Panc1 (cell line): ENCODE measurements at regions of chr12 and their contacts with region 1.

Region 1: GRCh38 chr12:57145460-57146059 is 1.9 kb downstream of the LRP1-AS start:
- DNase-seq: no peak
- ATAC-seq: peak; percentile 50; the same call in 1 of the 2 replicates
- H3K4me3 ChIP-seq: no peak overlapping the region
- H3K27ac ChIP-seq: no peak overlapping the region
- H3K4me1 ChIP-seq: no peaks in the 10 kb centered on the region
- H3K27me3 ChIP-seq: no peaks in the 10 kb centered on the region
- CTCF ChIP-seq: no peak

Region 2: DNA sequence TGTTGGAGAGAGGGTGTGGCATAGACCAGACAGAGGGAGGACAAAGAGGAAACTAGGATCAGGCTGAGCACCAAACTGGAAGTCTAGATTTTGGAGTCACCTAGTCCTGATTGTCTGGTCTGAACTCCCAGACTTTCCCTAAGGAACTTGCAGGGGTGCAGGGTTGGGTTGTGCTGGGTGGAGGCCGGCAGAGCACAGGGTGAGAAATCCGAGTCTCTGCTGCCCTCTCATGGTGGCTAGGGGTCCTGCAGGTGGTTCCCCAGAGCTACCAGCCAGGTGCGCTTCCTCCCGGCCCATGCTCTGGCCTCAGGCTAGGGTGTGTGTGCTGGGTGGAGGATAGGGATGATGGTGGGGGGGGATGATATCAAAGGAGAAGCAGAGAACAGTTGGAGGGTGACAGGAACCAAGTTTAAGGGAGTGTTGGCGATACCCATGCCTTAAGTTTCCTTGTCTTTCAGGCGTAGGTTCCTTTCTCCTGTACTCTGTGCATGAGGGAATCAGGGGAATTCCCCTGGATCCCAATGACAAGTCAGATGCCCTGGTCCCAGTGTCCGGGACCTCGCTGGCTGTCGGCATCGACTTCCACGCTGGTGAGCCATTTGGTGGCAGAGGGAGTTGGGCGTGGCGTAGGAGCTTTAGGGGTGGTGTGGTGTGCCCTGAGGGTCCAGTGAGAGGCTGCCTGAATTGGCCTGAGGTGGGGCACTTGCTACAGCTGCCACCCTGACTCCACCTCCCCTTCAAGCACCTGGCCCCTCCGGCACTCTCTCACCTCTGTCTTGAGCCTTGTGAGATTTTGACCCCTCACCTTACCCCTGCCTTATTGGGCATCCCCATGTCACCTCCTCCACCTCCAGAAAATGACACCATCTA is 37.6 kb after region 1 on chr12:
- CTCF ChIA-PET with region 1: interaction called, 14 read pairs
- POLR2A ChIA-PET with region 1: no interaction called
- in situ Hi-C with region 1: no loop called
- intact Hi-C with region 1: no loop called
- DNase-seq: peak; percentile 59
- ATAC-seq: peak; percentile 95
- H3K4me3 ChIP-seq: no peak overlapping the region
- H3K27ac ChIP-seq: no peak overlapping the region
- H3K4me1 ChIP-seq: no peaks in the 10 kb centered on the region
- H3K27me3 ChIP-seq: no peaks in the 10 kb centered on the region
- CTCF ChIP-seq: peak; percentile 94